H1 (cell line): ENCODE measurements at regions of chr6 and their contacts with region 1.

Region 1: DNA sequence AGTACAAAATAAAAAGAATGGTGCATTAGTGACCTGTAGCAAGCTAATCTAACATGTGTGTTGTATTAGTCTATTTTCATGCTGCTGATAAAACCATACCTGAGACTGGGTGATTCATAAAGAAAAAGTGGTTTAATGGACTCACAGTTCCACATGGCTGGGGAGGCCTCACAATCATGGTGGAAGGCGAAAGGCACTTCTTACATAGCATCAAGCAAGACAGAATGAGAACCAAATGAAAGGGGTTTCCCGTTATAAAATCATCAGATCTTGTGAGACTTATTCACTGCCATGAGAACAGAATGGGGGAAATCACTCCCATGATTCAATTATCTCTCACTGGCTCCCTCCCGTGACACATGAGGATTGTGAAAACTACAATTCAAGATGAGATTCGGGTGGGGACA is 45.4 kb upstream of the AIG1 start:
- DNase-seq: no peak
- H3K4me3 ChIP-seq: no peak overlapping the region
- H3K27ac ChIP-seq: no peak overlapping the region
- H3K4me1 ChIP-seq: no peaks in the 10 kb centered on the region
- H3K27me3 ChIP-seq: no peaks in the 10 kb centered on the region
- CTCF ChIP-seq: no peak
- EP300 ChIP-seq: no peak
- POLR2A ChIP-seq: no peak
- RAD21 ChIP-seq: no peak

Region 2: DNA sequence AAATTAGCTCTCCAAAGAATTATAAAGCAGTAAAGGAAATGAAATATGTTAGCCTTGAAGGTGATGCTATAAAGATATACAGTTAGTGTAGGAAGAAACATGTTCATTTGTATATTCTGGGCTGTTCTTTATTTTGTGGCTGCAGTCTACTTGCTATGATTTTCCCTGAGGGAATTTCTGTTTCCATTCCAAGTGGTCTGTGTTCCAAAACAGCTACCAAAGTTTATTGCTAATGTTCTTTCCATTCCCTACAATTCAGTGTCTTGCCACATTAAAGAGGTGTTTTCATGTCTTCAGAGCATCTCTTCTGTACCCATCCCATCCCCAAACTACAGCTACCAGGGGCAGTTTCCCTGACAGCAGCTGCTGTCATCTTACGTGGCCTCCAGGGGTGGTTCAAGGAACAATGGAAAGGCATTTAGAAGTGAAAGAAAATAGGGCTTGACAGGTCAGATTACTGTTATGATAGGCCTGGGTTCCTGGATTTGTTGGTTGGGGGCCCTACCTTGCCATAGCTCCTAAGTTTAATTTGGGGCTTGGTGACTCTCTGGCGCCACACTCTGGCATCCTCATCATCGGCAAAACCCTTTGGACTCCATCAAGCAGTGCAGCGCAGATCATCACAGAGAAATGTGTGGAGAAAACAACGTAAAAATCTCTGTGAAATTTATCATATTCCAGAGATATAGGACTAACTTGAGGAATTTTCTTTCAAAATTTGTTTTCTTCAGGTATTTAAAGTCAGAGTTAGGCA is 11.6 kb after region 1 on chr6:
- CTCF ChIA-PET with region 1: interaction called, 12 read pairs
- POLR2A ChIA-PET with region 1: no interaction called
- DNase-seq: peak; percentile 27 to 71
- H3K4me3 ChIP-seq: no peak overlapping the region
- H3K27ac ChIP-seq: no peak overlapping the region
- H3K4me1 ChIP-seq: no peaks in the 10 kb centered on the region
- H3K27me3 ChIP-seq: no peaks in the 10 kb centered on the region
- CTCF ChIP-seq: peak; percentile 74 to 85 (median 82)
- EP300 ChIP-seq: no peak
- POLR2A ChIP-seq: no peak
- RAD21 ChIP-seq: peak; percentile 88 to 91

Region 3: GRCh38 chr6:143299253-143300166 is 284.2 kb after region 1 on chr6:
- CTCF ChIA-PET with region 1: no interaction called
- POLR2A ChIA-PET with region 1: no interaction called
- DNase-seq: no peak
- H3K4me3 ChIP-seq: no peak overlapping the region
- H3K27ac ChIP-seq: no peak overlapping the region
- H3K4me1 ChIP-seq: peaks cover 0 to 3% (median 0%) of the 10 kb centered on the region in 4 experiments; a peak in 1 of 7 replicates
- H3K27me3 ChIP-seq: no peaks in the 10 kb centered on the region
- CTCF ChIP-seq: peak in 1 of 3 experiments; percentile 17; a peak in 1 of 4 replicates
- EP300 ChIP-seq: no peak
- POLR2A ChIP-seq: no peak
- RAD21 ChIP-seq: no peak